CD8-positive, alpha-beta memory T cell (primary cell): ENCODE measurements at regions of chr17 and their contacts with region 1.

Region 1: DNA sequence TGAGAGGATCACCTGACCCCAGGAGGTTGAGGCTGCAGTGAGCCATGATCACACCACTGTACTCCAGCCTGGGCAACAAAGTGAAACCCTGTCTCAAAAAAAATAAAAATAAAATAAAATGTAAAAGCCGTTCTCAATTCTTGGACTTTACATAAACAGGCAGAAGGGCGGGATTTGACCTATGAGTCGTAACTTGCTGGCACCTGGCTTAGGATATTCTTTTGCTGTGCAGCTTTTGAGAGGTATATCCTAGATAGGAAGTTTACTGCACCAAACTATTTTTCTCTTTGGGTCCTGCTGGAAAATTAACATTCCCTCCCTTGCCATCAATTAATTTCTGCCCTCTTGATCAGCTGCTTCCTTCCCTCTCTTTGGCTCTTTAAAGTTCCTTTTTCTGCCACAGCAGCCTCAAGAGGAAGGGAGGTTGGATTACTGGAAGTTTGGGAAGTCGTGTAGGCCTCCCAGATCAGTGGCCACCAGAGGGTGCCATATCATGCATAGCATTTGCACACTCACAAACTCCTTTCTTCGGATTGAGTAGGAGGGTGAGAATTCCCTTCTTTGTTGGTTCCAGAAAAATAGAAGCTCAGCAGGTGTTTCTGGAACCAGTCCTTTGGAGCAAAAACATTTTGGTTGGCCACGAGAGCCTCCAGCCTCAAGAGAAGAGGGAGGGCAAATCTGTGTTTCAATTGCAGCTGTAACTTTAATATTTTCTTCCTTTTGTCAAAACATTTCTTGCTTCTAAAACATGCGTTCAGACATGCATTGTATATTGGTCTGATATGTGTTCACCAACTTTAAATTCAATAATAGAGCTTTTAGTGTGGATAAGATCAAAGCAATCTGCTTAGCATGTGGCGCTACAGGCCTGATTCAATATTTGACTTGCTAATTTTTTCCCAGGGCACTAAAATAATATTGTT is 147.3 kb downstream of the CCDC182 start:
- DNase-seq: peak in 2 of 5 donors; percentile 20 to 24
- H3K4me3 ChIP-seq: no peak overlapping the region
- H3K4me3 Mint-ChIP-seq: peak overlapping the region in 5 of 7 donors; percentile 6 to 74 (median 57)
- H3K27ac ChIP-seq: no peak overlapping the region
- H3K27ac Mint-ChIP-seq: peak overlapping the region; percentile 69 to 98 (median 94)
- H3K4me1 ChIP-seq: peaks cover 54% of the 10 kb centered on the region
- H3K4me1 Mint-ChIP-seq: peaks cover 52 to 58% (median 53%) of the 10 kb centered on the region in 3 donors
- H3K27me3 ChIP-seq: no peaks in the 10 kb centered on the region
- H3K27me3 Mint-ChIP-seq: peaks cover 0 to 3% of the 10 kb centered on the region in 2 donors

Region 2: GRCh38 chr17:57379237-57379894 is 218.4 kb before region 1 on chr17:
- CTCF ChIA-PET with region 1: no interaction called
- POLR2A ChIA-PET with region 1: no interaction called
- DNase-seq: no peak
- H3K4me3 ChIP-seq: no peak overlapping the region
- H3K4me3 Mint-ChIP-seq: no peak overlapping the region
- H3K27ac ChIP-seq: peak overlapping the region; percentile 45
- H3K27ac Mint-ChIP-seq: peak overlapping the region in 2 of 8 donors; percentile 64 to 81
- H3K4me1 ChIP-seq: no peaks in the 10 kb centered on the region
- H3K4me1 Mint-ChIP-seq: peaks cover 14 to 43% (median 16%) of the 10 kb centered on the region in 3 donors
- H3K27me3 ChIP-seq: no peaks in the 10 kb centered on the region
- H3K27me3 Mint-ChIP-seq: no peaks in the 10 kb centered on the region

Region 3: DNA sequence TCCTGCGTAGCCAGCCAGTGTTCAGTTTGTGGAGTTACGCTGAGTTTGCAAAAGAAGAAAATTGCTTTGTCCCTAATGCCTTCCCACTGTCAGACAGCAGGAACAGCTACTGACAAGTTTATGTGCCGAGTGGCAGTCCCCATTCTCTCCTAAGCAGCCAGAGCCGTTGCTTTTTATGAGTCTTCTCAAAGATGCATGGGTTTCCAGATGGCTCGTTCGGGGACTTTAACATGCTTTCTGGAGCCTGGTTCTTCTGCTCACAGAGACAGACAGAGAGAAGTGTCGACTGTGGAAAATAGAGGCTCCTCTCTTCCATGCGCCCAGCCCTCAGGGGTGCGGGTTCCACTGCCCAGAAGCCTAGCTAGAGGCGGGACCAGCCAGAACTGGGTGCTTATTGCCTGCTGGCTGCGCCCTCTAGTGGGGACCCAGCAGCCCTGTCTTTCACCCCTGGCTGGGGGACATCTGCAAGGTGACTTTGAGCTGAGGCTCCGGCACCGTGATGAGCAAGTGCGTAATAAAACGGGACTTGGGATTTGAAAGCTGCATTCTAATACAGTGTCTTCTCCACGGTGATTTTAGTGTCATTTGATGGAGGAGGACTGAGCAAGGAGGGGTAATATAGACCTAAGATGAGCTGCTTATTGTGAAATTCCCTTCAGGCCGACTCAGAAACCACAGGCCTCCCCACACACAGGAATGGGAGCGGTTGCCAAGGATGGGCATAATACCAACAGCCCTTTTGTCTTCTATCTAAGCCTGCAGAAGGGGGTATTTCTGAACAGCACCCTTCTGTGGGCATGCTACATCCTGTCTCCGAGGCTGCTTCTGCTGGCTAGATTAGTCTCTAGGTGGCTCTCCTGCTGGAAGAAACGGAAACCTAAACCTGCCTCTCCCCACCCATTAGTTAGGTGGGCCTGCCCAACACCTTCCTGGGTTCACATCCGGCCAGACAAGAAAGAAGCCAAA is 74.2 kb after region 1 on chr17:
- CTCF ChIA-PET with region 1: interaction called, 79 read pairs
- POLR2A ChIA-PET with region 1: interaction called, 6 read pairs
- DNase-seq: peak; percentile 58 to 76 (median 67)
- H3K4me3 ChIP-seq: no peak overlapping the region
- H3K4me3 Mint-ChIP-seq: peak overlapping the region; percentile 8 to 79 (median 73)
- H3K27ac ChIP-seq: no peak overlapping the region
- H3K27ac Mint-ChIP-seq: peak overlapping the region; percentile 82 to 98 (median 95)
- H3K4me1 ChIP-seq: peaks cover 28% of the 10 kb centered on the region
- H3K4me1 Mint-ChIP-seq: peaks cover 44 to 57% (median 49%) of the 10 kb centered on the region in 3 donors
- H3K27me3 ChIP-seq: no peaks in the 10 kb centered on the region
- H3K27me3 Mint-ChIP-seq: peaks cover 0 to 3% of the 10 kb centered on the region in 2 donors